H1 (cell line): ENCODE measurements at regions of chr1 and their contacts with region 1.

Region 1: DNA sequence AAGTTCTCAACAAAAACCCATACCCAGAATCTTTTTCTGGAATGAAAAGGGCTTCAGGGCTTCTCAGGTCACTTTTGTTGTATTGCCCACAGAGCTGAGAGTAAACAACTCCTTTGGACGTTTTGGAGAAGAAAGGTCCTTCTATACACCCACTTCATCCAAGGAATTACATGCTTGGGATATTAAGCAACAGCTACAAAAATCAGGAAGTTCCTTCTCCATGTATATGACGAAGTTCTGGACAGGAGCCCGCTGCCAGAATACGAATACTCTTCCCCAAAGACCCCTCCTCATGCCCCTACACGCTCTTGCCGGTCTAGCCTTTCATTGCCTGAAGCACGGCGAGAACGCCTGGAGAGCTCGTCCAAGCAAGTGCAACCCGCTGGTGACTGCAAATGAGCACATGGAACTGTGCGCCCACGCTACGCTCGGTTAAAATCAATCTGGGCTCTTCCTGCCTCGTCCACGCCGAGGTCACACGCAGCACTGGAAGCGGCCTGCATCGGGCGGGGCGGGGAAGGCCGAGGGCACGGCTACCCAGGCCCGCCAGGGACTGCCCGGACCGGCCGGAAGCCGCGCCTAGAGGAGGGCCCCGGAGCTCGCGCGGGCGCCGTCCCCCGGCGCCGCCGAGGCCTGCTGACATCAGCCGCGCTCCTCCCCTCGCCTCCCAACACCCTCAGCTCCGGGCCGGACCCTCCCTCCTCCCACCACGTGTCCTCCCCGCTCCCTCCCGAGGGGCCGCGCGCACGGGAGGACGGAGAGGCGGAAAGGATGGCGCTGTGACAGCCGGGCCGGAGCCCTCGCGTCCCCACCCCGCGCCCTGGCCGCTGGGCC is at the start of gene POGK:
- DNase-seq: peak; percentile 70 to 84
- H3K4me3 ChIP-seq: peak within 1 kb of the TSS; percentile 71 to 90 (median 78)
- H3K27ac ChIP-seq: peak within 1 kb of the TSS; percentile 88
- H3K4me1 ChIP-seq: peaks cover 0 to 14% (median 3%) of the 10 kb centered on the region in 4 experiments; a peak in 5 of 7 replicates
- H3K27me3 ChIP-seq: no peaks in the 10 kb centered on the region
- CTCF ChIP-seq: no peak
- EP300 ChIP-seq: no peak; a peak in 1 of 3 replicates
- POLR2A ChIP-seq: peak in 1 of 2 experiments; percentile 67; a peak in 1 of 3 replicates
- RAD21 ChIP-seq: no peak
- total RNA-seq, gene POGK: 37.3 and 40.3 TPM in 2 replicates

Region 2: DNA sequence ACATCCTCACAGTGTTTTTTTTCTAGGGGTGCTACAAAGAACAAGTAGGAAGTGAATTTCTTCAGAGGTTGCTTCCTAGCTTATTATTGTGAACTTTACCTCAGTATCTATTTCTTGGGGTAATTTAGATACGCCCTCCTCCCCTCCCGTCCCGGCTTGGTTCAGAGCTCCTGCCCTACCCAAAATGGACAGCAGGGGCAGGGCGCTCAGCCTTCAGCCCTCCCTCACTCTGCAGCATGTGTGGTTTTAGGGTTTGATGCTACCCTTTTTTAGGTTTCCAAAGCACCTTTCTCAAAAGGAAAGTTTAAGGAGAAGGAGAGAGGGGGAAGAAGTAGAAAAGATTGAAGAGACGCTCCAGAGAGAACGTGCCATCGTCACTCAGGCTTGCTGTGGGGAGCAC is 16.6 kb before region 1 on chr1:
- CTCF ChIA-PET with region 1: interaction called, 13 read pairs
- POLR2A ChIA-PET with region 1: interaction called, 6 read pairs
- DNase-seq: peak in 1 of 2 experiments; percentile 68
- H3K4me3 ChIP-seq: no peak overlapping the region
- H3K27ac ChIP-seq: no peak overlapping the region
- H3K4me1 ChIP-seq: no peaks in the 10 kb centered on the region
- H3K27me3 ChIP-seq: no peaks in the 10 kb centered on the region; a peak in 1 of 7 replicates
- CTCF ChIP-seq: peak; percentile 47 to 84 (median 74)
- EP300 ChIP-seq: no peak
- POLR2A ChIP-seq: no peak
- RAD21 ChIP-seq: peak in 1 of 2 experiments; percentile 30; a peak in 1 of 4 replicates

Region 3: DNA sequence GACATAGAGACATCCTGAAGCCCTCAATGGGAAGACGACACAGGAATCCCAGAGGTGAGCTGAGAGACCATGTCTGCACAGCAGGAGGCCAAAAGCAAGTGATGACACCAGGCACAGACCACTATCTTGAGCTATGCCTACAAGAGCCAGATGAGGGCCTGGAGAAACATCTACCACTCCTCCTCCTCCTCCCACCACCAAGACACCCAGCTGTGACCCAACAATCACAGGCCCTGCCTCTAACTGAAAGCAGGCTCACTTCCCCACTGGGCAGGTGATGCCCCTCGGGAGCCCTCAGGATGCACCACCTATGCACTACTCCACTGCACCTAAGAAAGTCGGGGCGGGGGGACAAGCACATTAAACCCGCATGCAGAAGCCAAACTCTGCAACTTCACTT is 20.6 kb after region 1 on chr1:
- CTCF ChIA-PET with region 1: interaction called, 3 read pairs
- POLR2A ChIA-PET with region 1: interaction called, 147 read pairs
- DNase-seq: no peak
- H3K4me3 ChIP-seq: no peak overlapping the region
- H3K27ac ChIP-seq: no peak overlapping the region
- H3K4me1 ChIP-seq: peaks cover 3 to 15% (median 10%) of the 10 kb centered on the region in 4 experiments
- H3K27me3 ChIP-seq: no peaks in the 10 kb centered on the region
- CTCF ChIP-seq: no peak
- EP300 ChIP-seq: no peak
- POLR2A ChIP-seq: no peak
- RAD21 ChIP-seq: no peak